ENCODE measurements at regions of chr17 and their contacts with region 1.

Region 1: GRCh38 chr17:28726226-28727130 is at the start of gene TLCD1:
- DNase-seq: no peak
- H3K4me3 ChIP-seq: peak within 1 kb of the TSS; percentile 72
- CTCF ChIP-seq: peak; percentile 100

Region 2: GRCh38 chr17:28686296-28686695 is 40.2 kb before region 1 on chr17:
- CTCF ChIA-PET with region 1: no interaction called
- POLR2A ChIA-PET with region 1: no interaction called
- DNase-seq: no peak
- H3K4me3 ChIP-seq: no peak overlapping the region
- CTCF ChIP-seq: no peak

Region 3: DNA sequence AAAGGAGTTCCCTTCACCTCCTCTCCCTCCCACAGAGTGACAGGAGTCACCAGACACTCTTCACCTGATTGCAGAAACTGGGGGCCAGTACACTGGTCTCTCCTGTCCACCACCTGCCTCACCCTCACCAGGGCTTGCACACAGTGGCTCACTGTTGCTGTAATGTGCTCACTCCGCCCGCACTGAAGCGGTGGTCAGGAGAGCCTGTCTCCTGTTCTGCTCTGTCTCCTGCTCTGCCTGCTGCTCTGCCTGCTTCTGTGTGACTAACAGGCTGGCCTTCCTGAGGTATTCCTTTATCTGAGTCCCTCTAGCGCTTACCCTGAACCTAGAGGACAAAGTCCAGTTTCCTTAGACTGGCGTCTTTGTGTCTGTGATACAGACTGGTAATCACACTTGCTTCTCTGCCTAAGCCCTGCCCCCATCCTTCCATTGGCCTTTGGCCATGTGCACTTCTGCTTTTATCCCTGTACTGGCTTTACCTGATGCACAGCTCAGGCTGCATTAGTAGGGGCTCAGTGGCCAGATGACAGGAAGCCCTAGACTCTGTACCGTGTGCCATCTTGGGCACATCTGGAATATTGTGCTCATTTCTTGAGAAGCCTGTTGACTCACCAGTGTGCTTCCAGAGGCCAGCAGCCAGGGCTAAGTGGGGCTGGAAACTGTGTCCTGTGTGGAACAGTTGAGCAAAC is 28.1 kb before region 1 on chr17:
- CTCF ChIA-PET with region 1: no interaction called
- POLR2A ChIA-PET with region 1: no interaction called
- DNase-seq: no peak
- H3K4me3 ChIP-seq: no peak overlapping the region
- CTCF ChIP-seq: no peak

Region 4: DNA sequence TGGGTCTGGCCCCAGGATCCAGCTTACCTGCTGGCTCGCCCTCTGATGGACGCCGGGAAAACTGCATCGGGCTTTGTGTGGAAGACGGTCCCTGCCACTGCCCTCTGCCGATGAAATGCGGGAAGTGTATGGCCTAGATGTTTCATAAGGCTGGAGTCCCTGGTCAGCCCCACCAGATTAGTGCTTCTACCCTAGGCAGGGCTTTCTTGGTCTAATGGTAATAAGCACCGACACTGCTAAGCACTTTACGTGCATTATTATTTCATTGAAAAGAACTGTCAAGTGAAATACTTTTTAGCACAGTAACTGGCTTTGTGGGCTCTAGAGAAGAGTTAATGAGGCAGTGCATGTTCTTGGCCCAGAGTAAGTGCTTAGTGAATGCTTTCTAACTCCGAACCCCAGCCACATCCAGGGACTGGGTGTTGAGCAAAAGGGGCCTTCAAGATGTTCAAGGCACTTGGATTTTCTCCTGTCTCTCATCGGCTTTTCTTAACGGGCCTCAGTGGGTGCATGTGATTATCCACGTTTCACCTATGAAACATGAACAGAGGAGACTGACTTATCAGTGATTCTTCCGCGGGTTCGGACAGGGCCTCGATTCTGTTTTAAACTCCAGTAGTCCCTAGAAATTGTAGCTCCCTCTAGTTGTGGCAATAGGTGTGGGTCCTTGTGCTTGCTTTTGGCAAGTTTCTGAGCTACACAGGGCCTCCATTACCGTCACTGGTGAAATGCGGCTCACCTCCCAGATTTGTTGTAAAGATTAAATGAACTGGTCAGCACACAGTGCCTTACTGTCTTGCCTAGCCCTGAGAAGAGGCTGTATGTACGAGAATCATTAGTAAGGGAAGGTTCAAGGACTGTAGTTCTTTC is 23.9 kb after region 1 on chr17:
- CTCF ChIA-PET with region 1: interaction called, 603 read pairs
- POLR2A ChIA-PET with region 1: interaction called, 174 read pairs
- DNase-seq: no peak
- H3K4me3 ChIP-seq: no peak overlapping the region
- CTCF ChIP-seq: peak; percentile 100

Region 5: GRCh38 chr17:28878981-28879380 is 152.5 kb after region 1 on chr17:
- CTCF ChIA-PET with region 1: interaction called, 10 read pairs
- POLR2A ChIA-PET with region 1: no interaction called
- DNase-seq: no peak
- H3K4me3 ChIP-seq: no peak overlapping the region
- CTCF ChIP-seq: peak; percentile 63

Region 6: DNA sequence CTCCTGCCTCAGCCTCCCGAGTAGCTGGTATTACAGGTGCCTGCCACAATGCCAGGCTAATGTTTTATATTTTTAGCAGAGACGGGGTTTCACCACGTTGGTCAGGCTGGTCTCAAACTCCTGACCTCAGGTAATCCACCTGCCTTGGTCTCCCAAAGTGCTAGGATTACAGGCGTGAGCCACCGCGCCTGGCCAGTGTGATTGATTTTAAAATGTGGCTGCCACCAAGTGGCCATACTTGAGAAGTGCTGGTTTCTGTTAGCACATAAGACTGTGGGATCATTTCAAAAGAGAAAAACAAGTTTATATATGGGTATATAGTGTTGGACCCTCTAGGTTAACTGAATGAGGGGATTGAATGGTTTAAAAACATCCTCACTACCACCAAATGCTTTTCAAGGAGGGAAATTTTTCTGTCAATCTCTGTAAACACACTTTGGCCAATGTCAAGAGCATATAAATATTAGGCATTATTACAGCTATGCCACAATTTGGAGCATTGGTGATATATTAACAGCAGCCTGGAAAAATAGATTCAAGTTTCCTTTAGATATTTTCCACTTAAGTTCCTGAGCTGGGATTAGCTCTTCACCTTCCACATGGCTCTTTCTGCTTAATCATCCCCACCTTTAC is 189.9 kb after region 1 on chr17:
- CTCF ChIA-PET with region 1: interaction called, 58 read pairs
- POLR2A ChIA-PET with region 1: no interaction called
- DNase-seq: no peak
- H3K4me3 ChIP-seq: no peak overlapping the region
- CTCF ChIP-seq: peak; percentile 44

Region 7: DNA sequence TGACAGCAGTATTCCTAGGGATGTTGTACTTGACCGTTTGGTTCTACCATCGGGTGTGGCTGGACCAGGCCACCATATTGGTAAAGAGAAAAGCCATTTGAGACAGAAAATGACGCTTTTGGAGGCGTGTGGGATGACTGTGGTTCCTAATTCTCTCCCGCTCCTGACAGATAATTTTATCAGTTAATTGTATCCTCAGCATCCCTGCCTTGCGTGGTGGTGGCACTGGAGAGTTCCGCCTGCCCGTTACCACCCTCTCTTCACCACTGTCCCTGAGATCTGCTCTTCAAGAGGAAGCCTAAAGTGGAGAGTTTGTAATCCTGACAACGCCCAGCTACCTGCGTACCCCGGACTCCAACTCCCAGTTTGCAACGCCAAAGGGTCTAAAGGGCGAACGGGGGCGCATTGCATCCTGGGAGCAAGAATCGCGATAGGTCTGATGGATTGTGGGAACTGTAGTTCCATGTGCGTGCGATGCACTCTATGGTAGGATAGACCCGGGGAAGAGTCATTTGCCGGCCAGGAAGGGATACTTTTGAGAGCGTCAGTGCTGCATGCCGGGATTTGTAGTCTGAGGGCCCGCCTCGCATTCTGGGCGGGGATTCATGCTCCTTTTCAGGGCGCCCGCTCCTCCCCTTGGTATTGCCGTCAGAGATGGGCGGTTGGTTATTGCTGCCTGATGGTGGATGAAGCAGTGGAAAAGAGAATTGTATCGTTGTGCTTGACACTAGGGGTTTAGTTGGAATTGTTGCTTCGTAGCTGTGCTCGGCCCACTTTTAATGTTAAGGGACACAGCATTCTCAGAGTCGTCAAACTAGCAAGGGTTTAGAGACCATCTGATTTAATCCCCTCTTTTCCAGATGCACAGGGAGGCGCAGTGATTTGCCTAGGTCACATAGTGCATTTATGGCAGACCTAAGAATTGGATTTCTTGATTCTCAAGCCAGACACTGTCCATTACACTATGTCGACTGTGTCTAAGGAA is 225.8 kb after region 1 on chr17:
- CTCF ChIA-PET with region 1: interaction called, 155 read pairs
- POLR2A ChIA-PET with region 1: interaction called, 18 read pairs
- DNase-seq: peak; percentile 96
- H3K4me3 ChIP-seq: peak overlapping the region; percentile 76
- CTCF ChIP-seq: no peak

Region 8: GRCh38 chr17:29116804-29117772 is 390.6 kb after region 1 on chr17:
- CTCF ChIA-PET with region 1: interaction called, 34 read pairs
- POLR2A ChIA-PET with region 1: interaction called, 12 read pairs
- DNase-seq: no peak
- H3K4me3 ChIP-seq: no peak overlapping the region
- CTCF ChIP-seq: peak; percentile 92

Measured in AG04449 (cell line).